ENCODE measurements at regions of chr7 and their contacts with region 1.

Region 1: GRCh38 chr7:138002096-138002827 is 376 bp upstream of the CREB3L2 start:
- DNase-seq: peak; percentile 99
- ATAC-seq: peak; percentile 92
- H3K4me3 ChIP-seq: peak overlapping the region; percentile 83
- H3K27ac ChIP-seq: peak overlapping the region; percentile 55
- H3K4me1 ChIP-seq: peaks cover 6% of the 10 kb centered on the region
- H3K27me3 ChIP-seq: no peaks in the 10 kb centered on the region
- CTCF ChIP-seq: peak; percentile 85 to 95 (median 90)
- EP300 ChIP-seq: no peak
- POLR2A ChIP-seq: no peak
- RAD21 ChIP-seq: peak; percentile 62

Region 2: GRCh38 chr7:137920637-137921399 is 81.4 kb before region 1 on chr7:
- CTCF ChIA-PET with region 1: interaction called, 704 read pairs
- POLR2A ChIA-PET with region 1: interaction called, 11 read pairs
- RAD21 ChIA-PET with region 1: interaction called, 41 read pairs
- SMC1A ChIA-PET with region 1: interaction called, 31 read pairs
- in situ Hi-C with region 1: no loop called
- intact Hi-C with region 1: no loop called
- DNase-seq: no peak
- ATAC-seq: no peak
- H3K4me3 ChIP-seq: no peak overlapping the region
- H3K27ac ChIP-seq: no peak overlapping the region
- H3K4me1 ChIP-seq: peaks cover 30% of the 10 kb centered on the region
- H3K27me3 ChIP-seq: no peaks in the 10 kb centered on the region
- CTCF ChIP-seq: no peak
- EP300 ChIP-seq: no peak
- POLR2A ChIP-seq: no peak
- RAD21 ChIP-seq: no peak

Region 3: DNA sequence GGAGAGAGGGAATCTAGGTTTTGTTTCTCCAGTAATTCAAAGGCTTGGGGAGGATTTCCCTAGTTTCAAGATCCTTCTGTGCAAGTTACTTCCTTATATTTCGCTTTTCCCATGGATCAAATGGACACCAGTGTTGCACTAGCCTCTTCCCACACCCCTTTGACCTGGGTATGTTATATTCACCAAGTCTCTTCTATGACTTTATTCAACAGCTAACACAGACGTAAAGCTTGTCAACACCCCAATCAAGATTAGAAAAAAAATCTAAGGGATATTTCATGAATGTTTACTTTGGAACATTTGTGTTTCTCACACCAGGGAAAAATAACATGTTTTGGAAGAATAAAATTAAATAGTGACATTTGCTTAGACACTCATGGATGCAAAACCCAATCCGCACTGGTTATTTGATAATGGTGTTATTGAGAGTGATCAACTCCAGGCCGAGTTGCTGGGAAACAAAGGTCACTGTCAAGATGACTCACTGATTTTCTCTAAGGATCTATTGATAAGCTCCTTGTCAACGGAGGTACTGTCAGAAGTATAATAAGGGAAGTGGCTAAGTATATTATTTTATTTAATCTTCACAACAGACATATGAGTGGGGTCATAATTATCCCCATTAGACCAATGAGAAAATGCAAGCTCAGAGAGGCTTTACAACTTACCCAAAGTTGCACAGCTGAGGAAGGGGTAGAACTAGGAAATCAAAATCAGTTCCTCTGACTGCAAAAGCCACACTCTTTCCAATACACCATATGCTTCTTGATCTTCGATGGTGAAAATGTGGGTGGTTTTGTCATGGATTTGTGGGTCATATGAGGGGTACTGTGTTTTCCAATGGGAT is 52.6 kb before region 1 on chr7:
- CTCF ChIA-PET with region 1: interaction called, 9 read pairs
- POLR2A ChIA-PET with region 1: interaction called, 7 read pairs
- RAD21 ChIA-PET with region 1: interaction called, 5 read pairs
- SMC1A ChIA-PET with region 1: interaction called, 13 read pairs
- in situ Hi-C with region 1: no loop called
- intact Hi-C with region 1: no loop called
- DNase-seq: no peak
- ATAC-seq: no peak
- H3K4me3 ChIP-seq: no peak overlapping the region
- H3K27ac ChIP-seq: no peak overlapping the region
- H3K4me1 ChIP-seq: peaks cover 9% of the 10 kb centered on the region; the same call in 1 of the 2 replicates
- H3K27me3 ChIP-seq: no peaks in the 10 kb centered on the region
- CTCF ChIP-seq: no peak
- EP300 ChIP-seq: no peak
- POLR2A ChIP-seq: no peak
- RAD21 ChIP-seq: no peak

Region 4: GRCh38 chr7:137961200-137962177 is 40.8 kb before region 1 on chr7:
- CTCF ChIA-PET with region 1: interaction called, 6 read pairs
- POLR2A ChIA-PET with region 1: interaction called, 3 read pairs
- RAD21 ChIA-PET with region 1: interaction called, 5 read pairs
- SMC1A ChIA-PET with region 1: interaction called, 12 read pairs
- in situ Hi-C with region 1: no loop called
- intact Hi-C with region 1: loop called (anchors 2 kb)
- DNase-seq: no peak
- ATAC-seq: peak; percentile 90
- H3K4me3 ChIP-seq: no peak overlapping the region
- H3K27ac ChIP-seq: peak overlapping the region; percentile 14
- H3K4me1 ChIP-seq: peaks cover 30% of the 10 kb centered on the region
- H3K27me3 ChIP-seq: no peaks in the 10 kb centered on the region
- CTCF ChIP-seq: no peak
- EP300 ChIP-seq: no peak
- POLR2A ChIP-seq: no peak
- RAD21 ChIP-seq: no peak

Region 5: GRCh38 chr7:137985253-137985896 is 16.9 kb before region 1 on chr7:
- CTCF ChIA-PET with region 1: interaction called, 271 read pairs
- POLR2A ChIA-PET with region 1: interaction called, 127 read pairs
- RAD21 ChIA-PET with region 1: interaction called, 148 read pairs
- SMC1A ChIA-PET with region 1: interaction called, 516 read pairs
- in situ Hi-C with region 1: no loop called
- intact Hi-C with region 1: loop called (anchors 2 kb)
- DNase-seq: peak; percentile 69
- ATAC-seq: peak; percentile 58
- H3K4me3 ChIP-seq: peak overlapping the region; percentile 4; the same call in 1 of the 2 replicates
- H3K27ac ChIP-seq: peak overlapping the region; percentile 95
- H3K4me1 ChIP-seq: peaks cover 87% of the 10 kb centered on the region
- H3K27me3 ChIP-seq: no peaks in the 10 kb centered on the region
- CTCF ChIP-seq: no peak
- EP300 ChIP-seq: peak; percentile 83 to 90; a peak in 3 of 4 replicates
- POLR2A ChIP-seq: peak; percentile 41; the same call in 1 of the 2 replicates
- RAD21 ChIP-seq: no peak

Region 6: DNA sequence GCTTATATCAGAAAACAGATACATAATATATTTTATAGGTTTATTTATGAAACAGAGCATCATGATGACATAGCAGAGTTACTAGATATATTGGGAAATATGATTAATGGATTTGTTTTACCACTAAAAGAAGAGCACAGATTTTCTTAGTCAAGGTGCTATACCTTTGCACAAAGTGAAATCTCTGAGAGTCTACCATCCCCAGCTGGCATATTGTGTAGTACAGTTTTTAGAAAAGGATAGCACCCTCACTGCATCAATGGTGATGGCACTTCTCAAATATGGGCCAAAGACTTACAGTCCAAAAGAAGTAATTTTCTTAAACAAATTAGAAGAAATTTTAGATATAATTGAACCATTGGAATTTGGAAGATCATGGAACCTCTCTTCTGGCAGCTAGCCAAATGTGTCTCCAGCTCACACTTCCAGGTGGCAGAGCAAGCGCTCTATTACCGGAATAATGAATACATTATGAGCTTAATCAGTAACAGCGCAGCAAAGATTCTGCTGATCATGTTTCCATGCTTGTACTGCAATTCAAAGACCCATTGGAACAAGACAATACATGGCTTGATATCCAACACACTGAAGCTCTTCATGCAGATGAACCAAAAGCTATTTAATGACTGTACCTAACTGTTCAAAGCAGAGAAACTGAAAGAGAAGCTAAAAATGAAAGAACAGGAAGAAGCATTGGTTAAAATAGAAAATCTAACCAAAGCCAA is 21.5 kb after region 1 on chr7:
- CTCF ChIA-PET with region 1: interaction called, 44 read pairs
- POLR2A ChIA-PET with region 1: interaction called, 10 read pairs
- RAD21 ChIA-PET with region 1: interaction called, 15 read pairs
- SMC1A ChIA-PET with region 1: interaction called, 45 read pairs
- in situ Hi-C with region 1: no loop called
- intact Hi-C with region 1: no loop called
- DNase-seq: peak; percentile 61
- ATAC-seq: peak; percentile 90
- H3K4me3 ChIP-seq: peak overlapping the region; percentile 25; the same call in 1 of the 2 replicates
- H3K27ac ChIP-seq: peak overlapping the region; percentile 79
- H3K4me1 ChIP-seq: peaks cover 51% of the 10 kb centered on the region
- H3K27me3 ChIP-seq: no peaks in the 10 kb centered on the region
- CTCF ChIP-seq: no peak
- EP300 ChIP-seq: no peak
- POLR2A ChIP-seq: no peak
- RAD21 ChIP-seq: no peak

Region 7: DNA sequence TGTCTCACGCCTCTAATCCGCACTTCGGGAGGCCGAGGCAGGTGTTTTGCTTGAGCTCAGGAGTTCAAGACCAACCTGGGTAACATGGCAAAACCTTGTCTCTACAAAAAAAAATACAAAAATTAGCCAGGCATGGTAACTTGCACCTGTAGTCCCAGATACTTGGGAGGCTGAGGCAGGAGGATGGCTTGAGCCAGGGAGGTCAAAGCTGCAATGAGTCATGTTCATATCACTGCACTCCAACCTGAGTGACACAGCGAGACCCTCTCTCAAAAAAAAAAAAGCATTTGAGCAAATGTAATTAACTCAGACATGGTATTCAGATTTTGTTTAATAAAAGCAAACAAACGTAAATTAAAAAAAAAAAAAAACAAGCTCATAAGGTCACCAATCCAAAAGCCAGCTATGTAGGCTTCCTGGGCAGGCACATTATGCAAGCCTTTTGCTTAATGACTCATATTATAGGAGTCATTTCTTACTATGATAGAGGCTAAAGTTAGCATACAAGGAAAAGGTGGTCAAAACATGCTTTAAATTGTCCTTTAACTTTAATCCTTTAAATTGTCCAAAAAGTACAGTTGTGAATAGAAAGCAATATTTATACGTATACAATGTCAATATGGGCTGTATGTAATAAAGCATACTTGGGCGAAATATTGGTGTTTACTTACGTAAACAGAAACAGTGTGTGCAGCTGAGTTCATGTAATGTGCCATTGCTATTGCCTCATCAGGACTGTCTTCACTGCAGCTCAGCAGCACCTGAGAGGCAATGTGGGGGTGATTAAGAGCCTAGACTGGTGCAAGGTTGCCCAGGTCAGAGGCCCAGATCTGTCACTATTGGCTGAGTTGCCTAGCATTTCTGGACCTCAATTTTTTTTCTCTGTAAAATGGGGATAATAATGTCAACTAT is 87.1 kb after region 1 on chr7:
- CTCF ChIA-PET with region 1: no interaction called
- POLR2A ChIA-PET with region 1: no interaction called
- RAD21 ChIA-PET with region 1: no interaction called
- SMC1A ChIA-PET with region 1: no interaction called
- in situ Hi-C with region 1: no loop called
- intact Hi-C with region 1: no loop called
- DNase-seq: no peak
- ATAC-seq: no peak
- H3K4me3 ChIP-seq: no peak overlapping the region
- H3K27ac ChIP-seq: no peak overlapping the region
- H3K4me1 ChIP-seq: peaks cover 6% of the 10 kb centered on the region
- H3K27me3 ChIP-seq: no peaks in the 10 kb centered on the region
- CTCF ChIP-seq: no peak
- EP300 ChIP-seq: no peak
- POLR2A ChIP-seq: no peak
- RAD21 ChIP-seq: no peak

Region 8: GRCh38 chr7:139104091-139104450 is 1101.8 kb after region 1 on chr7:
- CTCF ChIA-PET with region 1: no interaction called
- POLR2A ChIA-PET with region 1: interaction called, 11 read pairs
- RAD21 ChIA-PET with region 1: no interaction called
- SMC1A ChIA-PET with region 1: no interaction called
- in situ Hi-C with region 1: no loop called
- intact Hi-C with region 1: no loop called
- DNase-seq: no peak
- ATAC-seq: peak; percentile 7
- H3K4me3 ChIP-seq: peak overlapping the region; percentile 72
- H3K27ac ChIP-seq: peak overlapping the region; percentile 74
- H3K4me1 ChIP-seq: peaks cover 3% of the 10 kb centered on the region; the same call in 1 of the 2 replicates
- H3K27me3 ChIP-seq: no peaks in the 10 kb centered on the region
- CTCF ChIP-seq: no peak
- EP300 ChIP-seq: no peak
- POLR2A ChIP-seq: no peak
- RAD21 ChIP-seq: no peak

Measured in GM12878 (cell line).